ENCODE measurements at regions of chr7 and their contacts with region 1.

Region 1: DNA sequence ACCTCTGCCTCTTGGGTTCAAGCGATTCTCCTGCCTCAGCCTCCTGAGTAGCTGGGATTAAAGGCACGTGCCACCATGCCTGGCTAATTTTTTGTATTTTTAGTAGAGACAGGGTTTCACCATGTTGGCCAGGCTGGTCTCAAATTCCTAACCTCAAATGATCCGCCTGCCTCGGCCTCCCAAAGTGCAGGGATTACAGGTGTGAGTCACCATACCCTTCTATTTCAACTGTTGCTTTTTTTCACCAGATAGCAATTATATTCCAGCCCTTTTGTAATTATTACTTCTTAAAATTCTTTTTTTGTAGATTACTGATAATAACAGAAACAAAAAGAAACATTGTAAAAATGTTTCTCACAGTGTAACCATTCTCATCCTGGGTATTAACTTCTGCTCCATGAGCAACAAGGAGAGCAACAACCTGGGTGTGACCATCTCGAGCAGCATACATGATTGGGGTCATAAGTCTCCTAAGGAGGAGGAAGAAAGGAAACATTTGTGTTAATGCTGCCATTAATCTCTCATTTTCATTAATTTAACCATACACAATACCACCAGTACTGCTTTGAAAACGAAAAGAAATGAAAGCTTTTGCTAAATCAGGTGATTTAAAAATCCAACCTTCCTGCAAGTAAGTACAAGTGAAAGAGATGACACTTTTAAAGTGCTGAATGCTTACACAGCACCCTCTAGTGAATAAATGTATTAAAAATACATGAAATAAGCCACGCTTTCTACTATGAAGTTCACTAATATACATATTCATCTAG is 41.8 kb downstream of the ASZ1 start:
- DNase-seq: no peak
- ATAC-seq: peak; percentile 88
- H3K4me3 ChIP-seq: no peak overlapping the region
- H3K27ac ChIP-seq: peak overlapping the region in 1 of 2 donors; percentile 5
- H3K4me1 ChIP-seq: peaks cover 0 to 6% of the 10 kb centered on the region in 2 donors
- H3K27me3 ChIP-seq: no peaks in the 10 kb centered on the region
- CTCF ChIP-seq: peak in 1 of 2 donors; percentile 34

Region 2: GRCh38 chr7:116953727-116954442 is 431.6 kb before region 1 on chr7:
- intact Hi-C with region 1: no loop called
- DNase-seq: peak; percentile 41 to 89 (median 84)
- ATAC-seq: peak; percentile 66
- H3K4me3 ChIP-seq: peak overlapping the region; percentile 66 to 87
- H3K27ac ChIP-seq: peak overlapping the region; percentile 96 to 99
- H3K4me1 ChIP-seq: peaks cover 20 to 39% of the 10 kb centered on the region in 2 donors
- H3K27me3 ChIP-seq: no peaks in the 10 kb centered on the region
- CTCF ChIP-seq: no peak

Region 3: GRCh38 chr7:117202511-117202910 is 183.0 kb before region 1 on chr7:
- intact Hi-C with region 1: loop called in 1 of 2 experiments (anchors 10 kb)
- DNase-seq: no peak
- ATAC-seq: no peak
- H3K4me3 ChIP-seq: no peak overlapping the region
- H3K27ac ChIP-seq: no peak overlapping the region
- H3K4me1 ChIP-seq: no peaks in the 10 kb centered on the region
- H3K27me3 ChIP-seq: no peaks in the 10 kb centered on the region
- CTCF ChIP-seq: no peak

Region 4: GRCh38 chr7:117530390-117530789 is 144.9 kb after region 1 on chr7:
- intact Hi-C with region 1: no loop called
- DNase-seq: no peak
- ATAC-seq: no peak
- H3K4me3 ChIP-seq: no peak overlapping the region
- H3K27ac ChIP-seq: no peak overlapping the region
- H3K4me1 ChIP-seq: no peaks in the 10 kb centered on the region
- H3K27me3 ChIP-seq: no peaks in the 10 kb centered on the region
- CTCF ChIP-seq: no peak

Region 5: GRCh38 chr7:117550625-117551024 is 165.1 kb after region 1 on chr7:
- intact Hi-C with region 1: no loop called
- DNase-seq: no peak
- ATAC-seq: no peak
- H3K4me3 ChIP-seq: no peak overlapping the region
- H3K27ac ChIP-seq: no peak overlapping the region
- H3K4me1 ChIP-seq: no peaks in the 10 kb centered on the region
- H3K27me3 ChIP-seq: no peaks in the 10 kb centered on the region
- CTCF ChIP-seq: no peak